ENCODE measurements at regions of chr3 and their contacts with region 1.

Region 1: GRCh38 chr3:115512565-115513415 is 110.5 kb upstream of the GAP43 start:
- DNase-seq: peak in 1 of 2 experiments; percentile 9
- H3K4me3 ChIP-seq: no peak overlapping the region
- H3K27ac ChIP-seq: no peak overlapping the region
- H3K4me1 ChIP-seq: no peaks in the 10 kb centered on the region
- H3K27me3 ChIP-seq: no peaks in the 10 kb centered on the region
- CTCF ChIP-seq: no peak

Region 2: DNA sequence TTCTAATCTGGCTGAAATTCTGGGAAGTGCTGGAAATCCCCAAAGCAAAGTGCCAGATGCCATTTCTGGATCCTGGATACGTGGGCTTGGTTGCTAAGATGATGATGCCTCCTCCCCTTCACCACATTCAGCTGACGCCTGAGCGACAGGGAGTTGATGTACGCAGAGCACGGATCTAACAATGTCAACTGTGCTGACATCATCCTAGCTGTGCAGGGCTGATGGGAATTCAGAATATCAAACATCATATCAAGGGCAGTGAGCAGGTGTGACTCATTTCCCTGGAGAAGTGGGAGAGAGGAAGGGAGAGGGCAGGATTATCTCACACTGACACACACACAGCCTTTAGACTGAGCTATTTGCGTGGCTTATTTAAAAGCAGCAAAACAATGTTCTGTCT is 273.1 kb before region 1 on chr3:
- CTCF ChIA-PET with region 1: no interaction called
- POLR2A ChIA-PET with region 1: no interaction called
- intact Hi-C with region 1: loop called (anchors 10 kb)
- DNase-seq: peak; percentile 59 to 68
- H3K4me3 ChIP-seq: no peak overlapping the region
- H3K27ac ChIP-seq: peak overlapping the region; percentile 43
- H3K4me1 ChIP-seq: peaks cover 12% of the 10 kb centered on the region
- H3K27me3 ChIP-seq: no peaks in the 10 kb centered on the region
- CTCF ChIP-seq: no peak

Region 3: DNA sequence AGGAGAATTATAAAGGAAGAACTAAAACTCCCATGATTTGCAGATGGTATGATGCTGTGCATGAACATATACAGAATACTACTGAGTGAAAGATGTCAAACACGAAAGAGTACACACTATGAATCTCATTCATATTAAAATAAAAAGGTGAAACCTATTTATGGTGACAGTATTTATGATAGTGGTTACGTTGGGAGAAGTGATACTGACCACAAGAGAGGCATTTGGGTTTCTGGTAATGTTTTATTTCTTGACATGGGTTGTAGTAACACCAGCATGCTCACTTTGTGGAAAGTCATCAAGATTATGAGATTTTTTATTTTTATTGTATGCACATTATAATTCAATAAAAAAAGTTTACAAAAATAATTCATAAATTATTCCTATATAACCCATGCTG is 434.5 kb after region 1 on chr3:
- CTCF ChIA-PET with region 1: no interaction called
- POLR2A ChIA-PET with region 1: no interaction called
- intact Hi-C with region 1: no loop called
- DNase-seq: no peak
- H3K4me3 ChIP-seq: no peak overlapping the region
- H3K27ac ChIP-seq: no peak overlapping the region
- H3K4me1 ChIP-seq: no peaks in the 10 kb centered on the region
- H3K27me3 ChIP-seq: no peaks in the 10 kb centered on the region
- CTCF ChIP-seq: no peak

Region 4: GRCh38 chr3:116135457-116136085 is 622.8 kb after region 1 on chr3:
- CTCF ChIA-PET with region 1: no interaction called
- POLR2A ChIA-PET with region 1: no interaction called
- intact Hi-C with region 1: no loop called
- DNase-seq: no peak
- H3K4me3 ChIP-seq: no peak overlapping the region
- H3K27ac ChIP-seq: no peak overlapping the region
- H3K4me1 ChIP-seq: no peaks in the 10 kb centered on the region
- H3K27me3 ChIP-seq: no peaks in the 10 kb centered on the region
- CTCF ChIP-seq: no peak